Left ventricle myocardium superior (tissue), 1 donor: ENCODE measurements at regions of chr7 and their contacts with region 1.

Region 1: GRCh38 chr7:107277331-107277730 is 108.5 kb downstream of the HBP1 start:
- DNase-seq: no peak
- ATAC-seq: peak; percentile 80

Region 2: GRCh38 chr7:107224374-107225223 is 52.7 kb before region 1 on chr7:
- intact Hi-C with region 1: loop called (anchors 10 kb)
- DNase-seq: no peak
- ATAC-seq: peak; percentile 4

Region 3: DNA sequence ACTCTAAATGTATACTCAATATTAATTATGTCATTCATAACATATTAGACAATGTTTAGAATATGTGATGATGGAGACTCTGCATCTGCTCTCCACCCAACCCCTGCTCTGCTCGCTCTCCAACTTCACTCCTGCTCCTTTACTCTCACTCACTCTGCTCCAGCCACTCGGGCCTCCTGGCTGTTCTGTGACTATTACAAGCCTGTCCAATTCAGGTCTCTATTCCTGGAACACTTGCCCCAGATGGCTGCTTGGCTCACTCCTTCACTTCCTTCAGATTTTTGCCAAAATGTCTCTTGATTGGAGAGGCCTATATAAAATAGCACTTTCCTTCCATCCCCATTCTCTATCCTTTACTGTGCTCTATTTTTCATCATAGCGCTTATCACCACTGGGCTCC is 23.7 kb before region 1 on chr7:
- intact Hi-C with region 1: no loop called
- DNase-seq: peak; percentile 50
- ATAC-seq: peak; percentile 92

Region 4: DNA sequence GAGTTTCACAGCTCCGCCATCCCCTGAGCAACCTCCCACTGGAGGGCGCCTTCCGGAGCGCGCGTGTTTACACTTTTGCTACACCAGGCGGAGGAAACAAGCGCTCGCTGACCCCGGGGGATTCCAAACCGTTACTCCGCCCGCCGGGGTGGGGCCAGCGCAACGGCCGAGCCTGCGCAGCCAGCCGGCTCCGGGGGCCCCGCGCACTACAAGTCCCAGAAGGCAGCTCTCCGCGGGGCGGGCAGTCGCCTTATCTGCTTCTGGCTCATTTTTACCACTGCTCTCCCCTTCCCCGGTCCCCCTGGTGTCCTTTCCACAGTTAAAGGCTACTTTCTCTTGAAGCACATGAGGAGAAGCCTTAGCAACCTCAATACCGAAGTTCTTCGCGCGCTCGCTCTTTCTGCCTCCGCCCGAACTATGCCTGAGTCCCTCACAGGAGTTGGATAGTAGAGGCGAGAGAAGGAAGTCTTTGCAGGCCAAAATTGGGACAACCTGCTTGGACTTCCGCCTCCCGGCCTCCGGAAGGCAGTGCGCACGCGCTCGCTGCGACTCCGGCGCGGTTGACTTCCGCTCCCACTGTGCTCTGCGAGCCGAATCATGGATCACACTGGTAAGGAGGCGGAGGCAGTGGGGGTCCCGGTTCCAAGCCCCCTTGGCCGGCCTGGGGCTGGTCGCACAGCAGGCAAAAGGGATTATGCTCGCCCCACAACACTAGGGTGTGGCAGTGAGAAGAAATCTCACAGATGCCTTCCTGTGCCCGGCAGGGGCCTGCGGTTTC is 466.4 kb after region 1 on chr7 and contains the start of gene CBLL1:
- intact Hi-C with region 1: no loop called
- DNase-seq: peak; percentile 99
- ATAC-seq: peak; percentile 99
- total RNA-seq, gene CBLL1: 24.8 TPM